Naive thymus-derived CD8-positive, alpha-beta T cell (primary cell): ENCODE measurements at regions of chr19 and their contacts with region 1.

Region 1: GRCh38 chr19:6424939-6425731 is 524 bp upstream of the KHSRP start:
- DNase-seq: peak; percentile 95 to 100 (median 99)
- ATAC-seq: peak; percentile 84 to 85
- H3K4me3 Mint-ChIP-seq: peak overlapping the region; percentile 67 to 91 (median 81)
- H3K27ac Mint-ChIP-seq: peak overlapping the region; percentile 89 to 97 (median 94)
- H3K4me1 Mint-ChIP-seq: peaks cover 14 to 51% (median 44%) of the 10 kb centered on the region in 4 donors
- H3K27me3 Mint-ChIP-seq: no peaks in the 10 kb centered on the region

Region 2: GRCh38 chr19:6362027-6362350 is 63.1 kb before region 1 on chr19:
- POLR2A ChIA-PET with region 1: interaction called, 16 read pairs
- DNase-seq: no peak
- ATAC-seq: peak in 1 of 2 donors; percentile 11
- H3K4me3 Mint-ChIP-seq: peak overlapping the region; percentile 91 to 100 (median 97)
- H3K27ac Mint-ChIP-seq: peak overlapping the region; percentile 86 to 98 (median 97)
- H3K4me1 Mint-ChIP-seq: peaks cover 16 to 40% (median 22%) of the 10 kb centered on the region in 4 donors
- H3K27me3 Mint-ChIP-seq: no peaks in the 10 kb centered on the region

Region 3: GRCh38 chr19:6372594-6373095 is 52.5 kb before region 1 on chr19 and contains the start of gene ALKBH7:
- POLR2A ChIA-PET with region 1: interaction called, 28 read pairs
- DNase-seq: peak; percentile 87 to 99 (median 98)
- ATAC-seq: peak; percentile 82 to 85
- H3K4me3 Mint-ChIP-seq: peak within 1 kb of the TSS; percentile 86 to 97 (median 93)
- H3K27ac Mint-ChIP-seq: peak within 1 kb of the TSS; percentile 73 to 98 (median 95)
- H3K4me1 Mint-ChIP-seq: peaks cover 12 to 26% (median 22%) of the 10 kb centered on the region in 4 donors
- H3K27me3 Mint-ChIP-seq: no peaks in the 10 kb centered on the region
- polyA plus RNA-seq, gene ALKBH7: 130 to 162 (median 144) TPM

Region 4: GRCh38 chr19:6393074-6393983 is 31.8 kb before region 1 on chr19 and contains the start of gene GTF2F1:
- POLR2A ChIA-PET with region 1: interaction called, 17 read pairs
- DNase-seq: peak; percentile 89 to 99 (median 97)
- ATAC-seq: peak; percentile 79 to 82
- H3K4me3 Mint-ChIP-seq: peak within 1 kb of the TSS; percentile 85 to 96 (median 94)
- H3K27ac Mint-ChIP-seq: peak within 1 kb of the TSS; percentile 89 to 99 (median 99)
- H3K4me1 Mint-ChIP-seq: peaks cover 19 to 36% (median 28%) of the 10 kb centered on the region in 4 donors
- H3K27me3 Mint-ChIP-seq: no peaks in the 10 kb centered on the region
- polyA plus RNA-seq, gene GTF2F1: 16.3 to 30.1 (median 20.6) TPM

Region 5: DNA sequence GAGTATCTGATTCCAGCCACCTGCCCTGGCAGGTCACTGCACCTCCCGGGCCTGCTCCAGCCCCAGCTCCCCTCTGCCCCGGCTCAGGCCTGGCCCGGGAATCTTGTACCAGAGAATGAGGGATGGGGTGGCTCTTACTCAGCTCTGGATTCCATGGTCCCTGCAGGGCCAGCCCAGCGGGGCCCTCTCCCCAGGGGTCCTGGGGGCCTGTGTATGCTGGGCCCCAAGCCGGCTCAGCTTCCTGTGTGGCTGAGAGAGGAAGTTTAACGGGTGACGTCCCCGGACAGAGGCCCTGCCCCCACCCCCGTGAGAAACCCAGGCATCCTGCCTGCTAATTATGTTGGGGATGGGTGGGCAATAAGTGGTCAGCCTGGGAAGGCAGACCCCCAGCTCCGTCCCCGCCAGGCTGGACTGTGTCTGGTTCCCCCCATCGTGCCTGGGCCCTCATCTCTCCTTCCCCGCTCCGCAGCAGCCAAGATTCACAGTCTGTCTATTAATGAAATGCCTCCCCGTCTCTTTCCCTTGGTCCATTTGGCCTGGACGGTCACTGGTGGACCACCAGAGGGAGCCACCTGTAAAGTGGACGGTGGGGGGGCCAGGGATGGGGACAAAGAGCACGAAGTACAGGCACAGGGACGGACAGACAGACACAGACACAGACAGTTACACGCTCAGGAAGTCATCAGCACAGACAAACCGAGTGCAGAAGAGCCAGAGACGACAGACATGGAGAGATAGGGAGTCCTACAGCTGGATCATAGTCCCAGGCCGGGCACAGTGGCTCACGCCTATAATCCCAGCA is 56.6 kb after region 1 on chr19 and contains the start of gene DENND1C:
- POLR2A ChIA-PET with region 1: interaction called, 23 read pairs
- DNase-seq: peak; percentile 27 to 81 (median 58)
- ATAC-seq: peak; percentile 86 to 88
- H3K4me3 Mint-ChIP-seq: peak within 1 kb of the TSS; percentile 84 to 100 (median 98)
- H3K27ac Mint-ChIP-seq: peak within 1 kb of the TSS; percentile 93 to 100 (median 98)
- H3K4me1 Mint-ChIP-seq: peaks cover 20 to 46% (median 44%) of the 10 kb centered on the region in 4 donors
- H3K27me3 Mint-ChIP-seq: no peaks in the 10 kb centered on the region
- polyA plus RNA-seq, gene DENND1C: 35.4 to 106 (median 67.7) TPM